GM10248 (cell line): ENCODE measurements at regions of chr2 and their contacts with region 1.

Region 1: DNA sequence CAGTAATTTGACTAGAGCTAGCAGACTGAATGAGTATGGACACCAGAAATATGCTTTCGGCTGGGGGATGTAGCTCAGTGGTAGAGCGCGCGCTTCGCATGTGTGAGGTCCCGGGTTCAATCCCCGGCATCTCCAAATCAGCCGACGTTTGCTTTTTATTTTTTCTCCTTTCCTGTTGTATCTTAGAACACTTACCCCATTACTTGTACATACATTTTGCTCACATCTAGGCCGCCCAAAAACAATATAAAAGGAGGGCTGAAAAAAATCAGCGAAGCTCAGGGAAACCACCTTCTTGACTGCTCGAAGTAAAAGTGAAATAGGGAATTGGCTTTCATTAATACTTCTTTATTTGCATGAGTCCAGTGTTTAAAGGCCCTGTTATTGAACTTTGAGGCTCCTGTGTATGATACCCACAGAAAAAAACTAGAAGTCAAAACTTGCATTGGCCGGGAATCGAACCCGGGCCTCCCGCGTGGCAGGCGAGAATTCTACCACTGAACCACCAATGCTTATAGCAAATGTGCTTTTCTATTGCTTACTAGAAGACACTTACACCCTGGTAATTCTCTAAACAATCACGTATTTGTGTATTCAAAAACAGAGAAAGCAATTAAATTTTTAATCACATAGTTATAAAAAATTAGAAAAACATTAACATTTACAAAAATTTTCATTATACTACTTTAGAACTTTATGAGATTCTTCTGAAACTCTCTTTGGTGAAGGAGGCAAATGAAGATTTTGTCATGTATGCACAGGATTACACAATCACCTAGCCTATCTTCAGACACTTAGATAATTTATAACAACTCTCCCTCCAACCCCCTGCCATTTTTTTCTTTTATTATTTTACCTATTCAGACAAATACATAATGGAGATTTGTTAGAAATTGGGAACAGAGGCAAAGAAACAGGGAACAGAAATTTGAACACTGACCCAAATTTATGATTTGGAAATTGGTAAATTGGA is 35.2 kb upstream of the GPD2 start:
- DNase-seq: peak; percentile 59
- CTCF ChIP-seq: no peak

Region 2: GRCh38 chr2:156346731-156347130 is 54.3 kb before region 1 on chr2:
- CTCF ChIA-PET with region 1: interaction called, 10 read pairs
- POLR2A ChIA-PET with region 1: no interaction called
- DNase-seq: no peak
- CTCF ChIP-seq: no peak

Region 3: DNA sequence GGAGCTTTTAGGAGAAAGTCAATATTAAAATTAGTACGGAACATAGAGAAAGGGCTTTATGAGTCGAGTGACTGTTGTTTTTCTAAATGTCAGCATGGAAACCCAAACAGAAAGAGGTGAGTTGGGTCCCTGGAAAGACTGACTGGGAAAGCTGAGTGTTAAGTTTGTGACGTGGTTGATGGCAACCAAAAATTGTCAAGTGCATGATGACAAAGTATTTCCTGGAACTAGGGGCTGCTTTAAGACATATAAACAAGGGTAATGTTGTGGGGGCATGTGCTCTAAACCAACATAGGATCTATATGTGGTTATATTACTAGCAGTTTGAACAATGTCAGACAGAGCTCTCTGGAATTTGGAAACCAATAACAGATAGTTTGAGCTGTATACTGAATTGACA is 15.8 kb before region 1 on chr2:
- CTCF ChIA-PET with region 1: interaction called, 10 read pairs
- POLR2A ChIA-PET with region 1: no interaction called
- DNase-seq: no peak
- CTCF ChIP-seq: no peak

Region 4: DNA sequence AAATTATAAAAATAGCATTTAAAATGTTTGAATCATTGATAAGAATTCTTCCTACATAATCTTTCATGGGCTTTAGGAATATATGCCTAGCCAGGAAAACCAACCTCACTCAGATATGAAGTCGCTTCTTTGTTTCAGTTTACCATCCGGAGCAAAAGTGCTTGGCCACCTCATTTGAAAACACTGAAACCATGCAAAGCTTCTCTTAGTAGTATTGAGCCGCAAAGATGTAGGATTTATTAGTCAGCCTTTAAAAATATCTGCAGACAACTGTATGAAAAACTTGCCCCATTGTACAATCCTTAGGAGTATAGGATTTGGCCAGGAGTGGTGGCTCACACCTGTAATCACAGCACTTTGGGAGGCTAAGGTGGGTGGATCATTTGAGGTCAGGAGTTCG is 10.8 kb after region 1 on chr2:
- CTCF ChIA-PET with region 1: interaction called, 11 read pairs
- POLR2A ChIA-PET with region 1: interaction called, 3 read pairs
- DNase-seq: no peak
- CTCF ChIP-seq: no peak

Region 5: DNA sequence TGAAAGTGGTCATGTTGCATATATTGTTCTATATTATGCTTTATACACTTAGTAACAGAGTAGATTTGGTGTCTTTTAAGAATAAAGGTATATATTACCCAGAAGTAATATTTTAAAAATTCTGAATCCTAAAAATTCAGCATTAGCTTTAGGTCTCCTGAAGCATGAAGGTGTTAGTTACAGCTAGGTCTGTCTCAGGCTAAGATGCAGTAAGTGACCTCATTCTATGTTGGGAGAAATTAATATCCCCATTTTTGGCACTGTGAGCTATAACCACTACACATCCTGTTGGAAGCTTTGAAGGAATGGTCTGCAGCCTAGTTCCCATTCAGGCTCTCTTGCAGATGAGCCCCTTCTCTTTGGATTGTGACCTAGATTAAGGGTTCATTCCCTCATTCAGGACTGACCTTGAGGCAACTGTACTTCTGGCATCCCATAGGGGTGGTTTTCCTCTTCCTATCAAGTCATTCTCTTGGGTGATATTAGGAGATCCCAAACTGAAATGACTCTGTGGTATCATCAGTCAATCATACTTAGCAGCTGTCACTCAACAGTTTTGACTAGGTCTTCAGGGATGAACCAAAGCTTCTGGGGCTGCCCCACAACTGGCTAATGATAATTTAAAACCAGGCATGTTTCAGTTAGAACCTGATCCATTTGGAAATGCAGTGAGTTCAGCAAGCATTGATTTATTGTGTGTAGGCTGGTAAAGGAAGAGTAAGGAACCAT is 152.9 kb after region 1 on chr2:
- CTCF ChIA-PET with region 1: no interaction called
- POLR2A ChIA-PET with region 1: no interaction called
- DNase-seq: no peak
- CTCF ChIP-seq: no peak